HepG2 (cell line): ENCODE measurements at regions of chr20 and their contacts with region 1.

Region 1: GRCh38 chr20:31630187-31630790 is 7.4 kb upstream of the COX4I2 start:
- DNase-seq: no peak
- ATAC-seq: no peak
- H3K4me3 ChIP-seq: no peak overlapping the region
- H3K27ac ChIP-seq: no peak overlapping the region
- H3K4me1 ChIP-seq: peaks cover 17% of the 10 kb centered on the region
- H3K27me3 ChIP-seq: no peaks in the 10 kb centered on the region; a peak in 2 of 5 replicates
- CTCF ChIP-seq: no peak
- EP300 ChIP-seq: no peak
- POLR2A ChIP-seq: no peak
- RAD21 ChIP-seq: no peak

Region 2: GRCh38 chr20:31704225-31705119 is 74.2 kb after region 1 on chr20:
- CTCF ChIA-PET with region 1: no interaction called
- POLR2A ChIA-PET with region 1: interaction called, 11 read pairs
- in situ Hi-C with region 1: no loop called
- intact Hi-C with region 1: no loop called
- DNase-seq: peak; percentile 100
- ATAC-seq: peak; percentile 88
- H3K4me3 ChIP-seq: peak overlapping the region in 1 of 3 experiments; percentile 38; a peak in 1 of 6 replicates
- H3K27ac ChIP-seq: peak overlapping the region; percentile 87
- H3K4me1 ChIP-seq: peaks cover 99% of the 10 kb centered on the region
- H3K27me3 ChIP-seq: no peaks in the 10 kb centered on the region
- CTCF ChIP-seq: no peak
- EP300 ChIP-seq: peak; percentile 99 to 100
- POLR2A ChIP-seq: peak; percentile 56 to 73; a peak in 3 of 4 replicates
- RAD21 ChIP-seq: peak; percentile 43